ENCODE measurements at regions of chr2 and their contacts with region 1.

Region 1: GRCh38 chr2:79065201-79065600 is 22.6 kb downstream of the REG1B start:
- DNase-seq: no peak

Region 2: GRCh38 chr2:79200762-79201161 is 135.6 kb after region 1 on chr2:
- in situ Hi-C with region 1: loop called (anchors 10 kb)
- DNase-seq: no peak

Measured in SK-MEL-5 (cell line).